ENCODE measurements at regions of chr20 and their contacts with region 1.

Region 1: GRCh38 chr20:50731055-50731871 is at the start of gene PARD6B:
- DNase-seq: peak; percentile 99
- H3K4me3 ChIP-seq: peak within 1 kb of the TSS; percentile 94
- H3K27ac ChIP-seq: peak within 1 kb of the TSS; percentile 90
- H3K4me1 ChIP-seq: peaks cover 29% of the 10 kb centered on the region
- H3K27me3 ChIP-seq: no peaks in the 10 kb centered on the region
- CTCF ChIP-seq: no peak
- total RNA-seq, gene PARD6B: 24.7 and 28.1 TPM in 2 replicates

Region 2: DNA sequence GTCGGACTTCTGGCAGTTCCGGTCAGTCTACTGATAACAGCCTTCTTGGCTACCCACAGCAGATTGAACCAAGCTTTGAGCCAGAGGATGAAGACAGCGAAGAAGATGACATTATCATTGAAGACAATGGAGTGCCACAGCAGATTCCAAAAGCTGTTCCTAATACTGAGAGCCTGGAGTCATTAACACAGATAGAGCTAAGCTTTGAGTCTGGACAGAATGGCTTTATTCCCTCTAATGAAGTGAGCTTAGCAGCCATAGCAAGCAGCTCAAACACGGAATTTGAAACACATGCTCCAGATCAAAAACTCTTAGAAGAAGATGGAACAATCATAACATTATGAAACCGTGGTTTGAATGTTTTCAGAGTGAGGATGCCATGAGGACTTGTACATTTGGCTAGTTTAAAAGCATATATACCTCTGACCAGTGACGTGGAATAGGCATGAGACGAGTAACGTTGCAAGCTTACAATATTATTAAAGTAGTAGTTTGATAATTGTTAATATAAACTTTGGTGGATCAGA is 18.9 kb after region 1 on chr20:
- CTCF ChIA-PET with region 1: interaction called, 11 read pairs
- POLR2A ChIA-PET with region 1: interaction called, 4 read pairs
- intact Hi-C with region 1: no loop called
- DNase-seq: no peak
- H3K4me3 ChIP-seq: no peak overlapping the region
- H3K27ac ChIP-seq: peak overlapping the region; percentile 17
- H3K4me1 ChIP-seq: peaks cover 27% of the 10 kb centered on the region
- H3K27me3 ChIP-seq: no peaks in the 10 kb centered on the region
- CTCF ChIP-seq: no peak

Region 3: DNA sequence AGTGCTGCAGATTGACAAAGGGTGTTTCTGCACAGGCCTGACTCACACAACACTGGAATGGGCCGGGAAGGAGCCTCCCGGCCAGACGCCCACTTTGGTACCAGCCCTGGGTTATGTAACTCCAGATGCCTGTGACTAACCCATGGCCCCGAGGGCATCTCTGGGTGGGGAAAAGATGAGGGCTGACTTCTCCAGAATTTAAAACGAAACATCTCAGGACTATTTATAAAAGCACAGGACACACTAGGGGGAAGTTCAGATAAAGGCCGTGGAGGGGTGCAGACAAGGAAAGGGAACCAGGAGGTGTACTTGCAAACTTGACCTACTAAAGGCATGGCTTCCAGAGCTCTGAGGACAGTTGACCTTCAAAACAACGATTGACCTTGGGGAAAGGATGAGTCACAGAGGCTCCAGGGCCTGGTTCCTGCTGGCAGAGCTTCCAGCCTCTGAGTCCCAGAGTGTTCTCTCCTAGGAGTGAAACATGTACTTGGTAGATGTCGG is 614.4 kb after region 1 on chr20:
- CTCF ChIA-PET with region 1: no interaction called
- POLR2A ChIA-PET with region 1: no interaction called
- intact Hi-C with region 1: no loop called
- DNase-seq: no peak
- H3K4me3 ChIP-seq: no peak overlapping the region
- H3K27ac ChIP-seq: no peak overlapping the region
- H3K4me1 ChIP-seq: no peaks in the 10 kb centered on the region
- H3K27me3 ChIP-seq: no peaks in the 10 kb centered on the region
- CTCF ChIP-seq: no peak